ENCODE measurements at regions of chr11 and their contacts with region 1.

Region 1: GRCh38 chr11:121722431-121723245 is 269.9 kb upstream of the SORL1-AS1 start:
- DNase-seq: peak; percentile 37 to 96 (median 93)
- H3K4me3 ChIP-seq: peak overlapping the region; percentile 46 to 94 (median 66)
- H3K27ac ChIP-seq: peak overlapping the region; percentile 86 to 100 (median 99)
- H3K27me3 ChIP-seq: no peaks in the 10 kb centered on the region
- CTCF ChIP-seq: peak in 19 of 56 donors; percentile 6 to 42 (median 10)

Region 2: DNA sequence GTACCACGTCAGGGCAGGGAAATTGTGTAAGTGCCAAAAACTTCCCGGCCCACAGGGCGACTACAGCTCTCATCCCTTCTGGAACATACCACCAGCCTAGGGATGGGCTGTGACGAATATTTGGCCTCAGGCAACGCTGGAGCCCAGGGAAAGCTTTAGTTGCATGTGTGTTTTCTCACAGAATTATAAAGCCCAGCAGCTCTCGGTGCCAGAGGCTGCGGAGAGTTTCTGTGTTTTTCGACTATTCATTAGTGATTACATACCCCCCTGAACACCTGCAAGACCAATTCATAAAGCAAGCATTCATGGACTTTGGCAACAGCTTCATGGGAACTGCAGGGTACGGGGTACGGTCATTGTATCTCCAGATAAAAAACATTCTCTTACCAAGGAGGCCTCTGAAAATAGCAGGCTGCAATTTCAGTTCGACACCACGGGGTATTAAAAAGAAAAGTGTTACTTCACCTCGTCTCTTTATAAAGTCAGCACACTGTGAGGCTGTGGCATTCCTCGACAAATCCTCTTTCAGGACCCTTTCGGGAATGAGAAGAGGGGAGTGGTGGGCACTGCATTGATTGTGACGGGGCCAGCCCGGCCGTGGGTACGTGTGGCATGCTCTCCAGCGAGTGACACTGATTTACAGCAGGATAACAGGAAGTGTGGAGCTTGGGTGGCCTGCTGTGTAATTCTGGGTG is 26.3 kb before region 1 on chr11:
- intact Hi-C with region 1: loop called in 1 of 2 experiments (anchors 2 kb)
- DNase-seq: peak; percentile 7 to 75 (median 63)
- H3K4me3 ChIP-seq: peak overlapping the region in 52 of 59 donors; percentile 2 to 58 (median 26)
- H3K27ac ChIP-seq: peak overlapping the region; percentile 83 to 99 (median 95)
- H3K27me3 ChIP-seq: no peaks in the 10 kb centered on the region
- CTCF ChIP-seq: peak in 2 of 56 donors; percentile 6 to 8

Region 3: GRCh38 chr11:121795174-121795573 is 72.5 kb after region 1 on chr11:
- intact Hi-C with region 1: no loop called
- DNase-seq: peak in 4 of 10 donors; percentile 41 to 54 (median 42)
- H3K4me3 ChIP-seq: peak overlapping the region in 55 of 59 donors; percentile 3 to 66 (median 41)
- H3K27ac ChIP-seq: peak overlapping the region in 53 of 59 donors; percentile 1 to 91 (median 73)
- H3K27me3 ChIP-seq: no peaks in the 10 kb centered on the region
- CTCF ChIP-seq: no peak

Region 4: DNA sequence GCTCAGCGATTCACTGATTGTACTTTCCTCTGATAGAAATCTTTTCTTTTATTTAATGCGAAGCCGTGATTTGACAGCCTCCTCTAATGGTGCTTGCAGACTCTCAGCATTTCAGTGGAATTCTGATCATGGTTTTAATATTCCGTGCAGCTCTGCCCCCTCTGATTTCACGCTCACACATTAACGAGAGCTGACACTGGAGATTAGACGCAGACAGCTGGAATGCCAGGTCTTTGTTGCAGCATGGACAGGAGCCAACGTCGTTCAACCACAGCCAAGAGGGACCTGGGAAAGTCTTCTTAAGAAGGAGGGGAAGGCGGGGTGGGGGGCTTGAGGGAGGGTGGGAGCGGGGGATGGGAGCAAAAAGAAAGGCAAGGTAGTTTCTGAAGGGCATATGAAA is 206.9 kb after region 1 on chr11:
- intact Hi-C with region 1: loop called in 1 of 2 experiments (anchors 2 kb)
- DNase-seq: peak in 7 of 10 donors; percentile 31 to 65 (median 46)
- H3K4me3 ChIP-seq: peak overlapping the region; percentile 20 to 74 (median 55)
- H3K27ac ChIP-seq: peak overlapping the region; percentile 1 to 92 (median 79)
- H3K27me3 ChIP-seq: no peaks in the 10 kb centered on the region
- CTCF ChIP-seq: no peak

Region 5: DNA sequence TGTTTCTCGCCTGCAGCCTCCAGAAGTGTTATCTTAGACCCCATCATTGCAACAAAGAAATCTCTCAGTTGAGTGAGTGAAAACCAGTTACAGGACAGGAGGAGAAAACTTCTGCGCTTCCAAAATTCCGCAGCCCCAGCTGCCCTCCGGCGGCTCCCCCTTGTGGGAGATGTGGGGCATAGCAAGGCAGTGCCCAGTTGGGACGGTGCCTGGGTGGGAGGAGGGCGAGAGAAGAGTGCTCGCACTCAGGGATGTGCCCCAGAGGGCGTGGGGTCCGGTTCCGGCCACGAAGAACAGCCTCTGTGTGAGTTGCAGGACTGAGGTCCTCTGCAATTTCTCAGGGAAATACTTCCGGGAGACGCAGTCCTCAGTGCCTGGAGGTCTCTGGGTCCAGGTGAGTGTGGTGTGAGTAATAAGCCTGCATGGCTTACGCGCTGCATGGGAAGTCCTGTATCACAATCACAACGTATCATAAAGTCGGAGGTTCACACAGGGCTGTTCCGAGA is 480.4 kb after region 1 on chr11:
- intact Hi-C with region 1: loop called in 1 of 2 experiments (anchors 5 kb)
- DNase-seq: peak; percentile 26 to 83 (median 65)
- H3K4me3 ChIP-seq: peak overlapping the region; percentile 29 to 82 (median 61)
- H3K27ac ChIP-seq: peak overlapping the region in 58 of 59 donors; percentile 34 to 99 (median 88)
- H3K27me3 ChIP-seq: no peaks in the 10 kb centered on the region
- CTCF ChIP-seq: peak; percentile 87 to 100 (median 98)

Measured in dorsolateral prefrontal cortex (tissue), 120 donors.